Kidney (tissue), 22 donors: ENCODE measurements at regions of chr1 and their contacts with region 1.

Region 1: DNA sequence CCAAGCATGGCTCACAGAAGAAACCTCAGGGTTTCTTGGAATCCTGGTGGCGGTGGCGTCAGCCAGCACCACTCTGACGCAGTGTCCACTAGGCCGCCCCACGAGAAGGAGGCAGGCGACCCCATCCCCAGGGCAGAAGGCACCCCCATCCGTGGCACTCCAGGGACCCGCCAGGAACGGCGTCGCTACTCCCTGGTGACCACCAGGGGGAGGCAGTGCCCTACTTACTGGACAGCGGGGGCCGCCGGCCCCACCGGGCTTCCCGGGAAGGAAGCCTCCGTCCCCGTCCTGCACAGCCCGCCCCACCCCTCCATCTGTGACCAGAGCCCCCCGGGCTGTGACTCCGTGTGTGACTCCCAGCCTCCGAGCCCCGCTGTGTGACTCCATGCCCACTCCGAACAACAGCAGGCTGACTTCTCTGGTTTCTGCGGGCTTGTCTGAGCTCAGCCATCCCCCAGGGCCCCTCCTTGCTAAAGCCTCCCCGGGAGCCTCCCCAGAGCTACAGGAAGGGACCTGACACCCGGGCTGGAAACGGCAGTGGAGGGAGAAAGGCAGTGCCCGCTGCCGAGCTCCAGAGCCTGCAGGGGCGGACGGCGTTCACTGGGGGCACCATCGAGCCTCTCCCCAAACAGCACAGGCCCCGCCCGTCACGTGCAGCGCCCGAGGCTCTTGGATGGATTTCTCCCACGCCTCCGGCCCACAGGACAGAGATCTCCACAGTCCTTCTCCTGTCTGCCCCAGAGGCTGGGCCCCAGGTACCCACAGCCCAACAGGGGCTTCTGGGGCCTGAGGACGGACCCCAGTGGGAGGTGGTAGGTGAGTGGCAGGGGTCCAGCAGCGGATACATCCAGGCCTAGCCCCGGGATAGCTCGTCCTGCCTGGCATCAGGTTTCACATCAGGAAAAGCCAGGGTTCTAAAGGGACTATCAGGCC is 21.1 kb downstream of the KIF17 start:
- DNase-seq: peak; percentile 95 to 97 (median 96)
- H3K4me3 ChIP-seq: peak overlapping the region; percentile 36 to 73 (median 51)
- H3K27ac ChIP-seq: peak overlapping the region; percentile 70 to 71
- H3K4me1 ChIP-seq: peaks cover 0 to 2% (median 0%) of the 10 kb centered on the region in 3 donors
- H3K27me3 ChIP-seq: no peaks in the 10 kb centered on the region
- CTCF ChIP-seq: peak; percentile 87

Region 2: DNA sequence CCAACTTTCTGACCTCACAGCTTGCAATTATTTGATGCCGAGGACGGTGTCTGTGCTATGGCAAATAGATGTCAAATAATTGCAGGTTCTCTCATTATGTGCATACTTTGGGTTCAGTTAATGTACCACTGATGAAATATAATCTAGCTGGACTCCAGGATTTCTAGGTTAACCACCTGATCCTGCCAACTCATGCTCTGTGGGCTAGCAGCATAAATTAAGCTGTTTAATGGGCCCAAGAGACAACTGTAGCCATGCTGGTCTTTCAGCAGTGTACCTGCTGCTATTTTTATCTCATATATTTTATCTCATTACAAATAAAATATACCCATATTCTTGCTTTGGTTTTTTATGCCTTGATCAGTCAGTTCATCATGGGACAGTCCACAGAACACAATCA is 133.7 kb after region 1 on chr1:
- intact Hi-C with region 1: no loop called
- DNase-seq: peak in 2 of 5 donors; percentile 25 to 30
- H3K4me3 ChIP-seq: no peak overlapping the region
- H3K27ac ChIP-seq: no peak overlapping the region
- H3K4me1 ChIP-seq: no peaks in the 10 kb centered on the region
- H3K27me3 ChIP-seq: no peaks in the 10 kb centered on the region
- CTCF ChIP-seq: no peak

Region 3: DNA sequence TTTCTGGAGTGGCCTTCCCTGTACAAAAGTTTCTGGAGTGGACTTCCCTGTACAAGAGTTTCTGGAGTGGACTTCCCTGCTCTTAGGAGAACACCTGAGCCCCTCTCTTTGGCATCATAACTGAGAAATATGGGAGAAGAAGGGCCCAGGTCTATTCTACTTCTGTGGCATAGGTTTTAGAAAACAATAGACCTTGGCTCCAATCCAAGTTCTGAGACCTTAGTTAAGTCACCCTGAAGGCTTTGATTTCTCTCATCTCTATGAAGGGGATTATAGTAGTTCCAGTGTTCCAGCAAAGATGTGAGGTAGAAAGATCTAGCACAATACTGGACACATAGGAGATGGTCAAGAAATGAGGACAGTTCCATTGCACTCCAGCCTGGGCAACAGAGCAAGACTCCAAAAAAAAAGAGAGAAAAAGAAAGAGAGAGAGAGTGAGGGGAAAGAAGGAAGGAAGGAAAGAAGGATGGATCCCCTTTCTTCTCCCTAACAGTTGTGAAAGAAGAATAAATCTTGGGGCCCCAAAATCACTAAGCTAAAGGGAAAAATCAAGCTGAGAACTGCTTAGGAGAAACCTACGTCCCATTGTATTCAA is 493.3 kb after region 1 on chr1:
- intact Hi-C with region 1: loop called (anchors 10 kb)
- DNase-seq: no peak
- H3K4me3 ChIP-seq: no peak overlapping the region
- H3K27ac ChIP-seq: no peak overlapping the region
- H3K4me1 ChIP-seq: no peaks in the 10 kb centered on the region
- H3K27me3 ChIP-seq: no peaks in the 10 kb centered on the region
- CTCF ChIP-seq: no peak